Common myeloid progenitor, CD34-positive (primary cell): ENCODE measurements at regions of chr5 and their contacts with region 1.

Region 1: GRCh38 chr5:54492178-54492577 is 25.4 kb upstream of the SNX18 start:
- DNase-seq: no peak
- H3K4me3 ChIP-seq: no peak overlapping the region
- H3K27ac ChIP-seq: no peak overlapping the region
- H3K4me1 ChIP-seq: no peaks in the 10 kb centered on the region
- H3K27me3 ChIP-seq: no peaks in the 10 kb centered on the region

Region 2: GRCh38 chr5:54243473-54244080 is 248.6 kb before region 1 on chr5:
- CTCF ChIA-PET with region 1: interaction called, 30 read pairs
- POLR2A ChIA-PET with region 1: interaction called, 3 read pairs
- DNase-seq: peak; percentile 43 to 65 (median 58)
- H3K4me3 ChIP-seq: no peak overlapping the region
- H3K27ac ChIP-seq: no peak overlapping the region
- H3K4me1 ChIP-seq: peaks cover 0 to 3% (median 0%) of the 10 kb centered on the region in 4 experiments
- H3K27me3 ChIP-seq: no peaks in the 10 kb centered on the region

Region 3: GRCh38 chr5:54249210-54250028 is 242.8 kb before region 1 on chr5:
- CTCF ChIA-PET with region 1: interaction called, 30 read pairs
- POLR2A ChIA-PET with region 1: no interaction called
- DNase-seq: peak; percentile 50 to 86 (median 78)
- H3K4me3 ChIP-seq: no peak overlapping the region
- H3K27ac ChIP-seq: no peak overlapping the region
- H3K4me1 ChIP-seq: peaks cover 3 to 11% (median 7%) of the 10 kb centered on the region in 4 experiments
- H3K27me3 ChIP-seq: no peaks in the 10 kb centered on the region

Region 4: GRCh38 chr5:54398191-54398590 is 94.0 kb before region 1 on chr5:
- CTCF ChIA-PET with region 1: no interaction called
- POLR2A ChIA-PET with region 1: no interaction called
- DNase-seq: no peak
- H3K4me3 ChIP-seq: no peak overlapping the region
- H3K27ac ChIP-seq: no peak overlapping the region
- H3K4me1 ChIP-seq: no peaks in the 10 kb centered on the region
- H3K27me3 ChIP-seq: no peaks in the 10 kb centered on the region

Region 5: DNA sequence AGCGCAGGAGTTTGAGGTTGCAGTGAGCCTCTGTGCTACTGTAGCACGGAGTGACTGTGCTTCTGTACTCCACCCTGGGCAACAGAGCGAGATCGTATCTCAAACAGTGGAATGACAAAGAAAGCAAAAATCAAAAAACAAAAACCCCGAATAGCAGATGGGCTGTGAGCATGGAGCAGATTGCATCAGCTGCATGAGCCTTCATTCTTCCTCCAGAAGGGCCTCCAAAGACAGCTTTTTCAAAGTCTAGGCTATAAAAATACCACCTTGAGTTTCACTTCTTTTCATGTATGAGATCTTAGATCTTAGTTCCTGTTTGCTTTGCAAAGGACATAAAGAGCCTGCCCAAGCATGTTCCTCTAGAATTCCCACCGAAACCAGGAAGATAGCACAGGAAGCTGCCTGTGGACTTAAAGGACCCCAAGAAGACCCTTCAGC is 51.7 kb before region 1 on chr5:
- CTCF ChIA-PET with region 1: interaction called, 10 read pairs
- POLR2A ChIA-PET with region 1: no interaction called
- DNase-seq: no peak
- H3K4me3 ChIP-seq: no peak overlapping the region
- H3K27ac ChIP-seq: no peak overlapping the region
- H3K4me1 ChIP-seq: no peaks in the 10 kb centered on the region
- H3K27me3 ChIP-seq: no peaks in the 10 kb centered on the region

Region 6: GRCh38 chr5:54533541-54534190 is 41.5 kb after region 1 on chr5:
- CTCF ChIA-PET with region 1: no interaction called
- POLR2A ChIA-PET with region 1: no interaction called
- DNase-seq: no peak
- H3K4me3 ChIP-seq: no peak overlapping the region
- H3K27ac ChIP-seq: no peak overlapping the region
- H3K4me1 ChIP-seq: peaks cover 1 to 12% (median 7%) of the 10 kb centered on the region in 4 experiments
- H3K27me3 ChIP-seq: no peaks in the 10 kb centered on the region